ENCODE measurements at regions of chr7 and their contacts with region 1.

Region 1: GRCh38 chr7:50418086-50418515 is 32.0 kb downstream of the FIGNL1 start:
- DNase-seq: peak; percentile 43 to 81 (median 56)
- H3K4me3 ChIP-seq: no peak overlapping the region
- H3K4me3 Mint-ChIP-seq: no peak overlapping the region
- H3K27ac ChIP-seq: no peak overlapping the region
- H3K27ac Mint-ChIP-seq: no peak overlapping the region
- H3K4me1 ChIP-seq: peaks cover 13% of the 10 kb centered on the region
- H3K4me1 Mint-ChIP-seq: peaks cover 12 to 20% (median 19%) of the 10 kb centered on the region in 3 donors
- H3K27me3 ChIP-seq: no peaks in the 10 kb centered on the region
- H3K27me3 Mint-ChIP-seq: no peaks in the 10 kb centered on the region

Region 2: GRCh38 chr7:50092579-50093491 is 325.3 kb before region 1 on chr7 and contains the start of gene ZPBP:
- CTCF ChIA-PET with region 1: interaction called, 13 read pairs
- POLR2A ChIA-PET with region 1: no interaction called
- DNase-seq: peak in 4 of 5 donors; percentile 25 to 66 (median 60)
- H3K4me3 ChIP-seq: peak within 1 kb of the TSS; percentile 54
- H3K4me3 Mint-ChIP-seq: peak within 1 kb of the TSS; percentile 85 to 94 (median 90)
- H3K27ac ChIP-seq: no peak within 1 kb of the TSS
- H3K27ac Mint-ChIP-seq: peak within 1 kb of the TSS in 6 of 8 donors; percentile 24 to 85 (median 82)
- H3K4me1 ChIP-seq: no peaks in the 10 kb centered on the region
- H3K4me1 Mint-ChIP-seq: peaks cover 6 to 13% (median 7%) of the 10 kb centered on the region in 3 donors
- H3K27me3 ChIP-seq: no peaks in the 10 kb centered on the region
- H3K27me3 Mint-ChIP-seq: peaks cover 0 to under 1% of the 10 kb centered on the region in 2 donors
- total RNA-seq, gene ZPBP: 0.22 TPM in 1 of 2 experiments, not detected in the other

Region 3: GRCh38 chr7:50142425-50143017 is 275.6 kb before region 1 on chr7:
- CTCF ChIA-PET with region 1: interaction called, 39 read pairs
- POLR2A ChIA-PET with region 1: no interaction called
- DNase-seq: peak in 3 of 5 donors; percentile 15 to 62 (median 45)
- H3K4me3 ChIP-seq: no peak overlapping the region
- H3K4me3 Mint-ChIP-seq: peak overlapping the region in 5 of 7 donors; percentile 49 to 74 (median 67)
- H3K27ac ChIP-seq: no peak overlapping the region
- H3K27ac Mint-ChIP-seq: peak overlapping the region in 5 of 8 donors; percentile 22 to 85 (median 64)
- H3K4me1 ChIP-seq: peaks cover 9% of the 10 kb centered on the region
- H3K4me1 Mint-ChIP-seq: peaks cover 2 to 19% (median 17%) of the 10 kb centered on the region in 3 donors
- H3K27me3 ChIP-seq: no peaks in the 10 kb centered on the region
- H3K27me3 Mint-ChIP-seq: peaks cover 0 to 16% of the 10 kb centered on the region in 2 donors

Region 4: GRCh38 chr7:50369143-50370026 is 48.7 kb before region 1 on chr7:
- CTCF ChIA-PET with region 1: interaction called, 15 read pairs
- POLR2A ChIA-PET with region 1: no interaction called
- DNase-seq: peak in 4 of 5 donors; percentile 44 to 82 (median 72)
- H3K4me3 ChIP-seq: peak overlapping the region; percentile 27
- H3K4me3 Mint-ChIP-seq: peak overlapping the region; percentile 7 to 72 (median 62)
- H3K27ac ChIP-seq: no peak overlapping the region
- H3K27ac Mint-ChIP-seq: peak overlapping the region in 7 of 8 donors; percentile 87 to 100 (median 93)
- H3K4me1 ChIP-seq: peaks cover 97% of the 10 kb centered on the region
- H3K4me1 Mint-ChIP-seq: peaks cover 94 to 100% (median 98%) of the 10 kb centered on the region in 3 donors
- H3K27me3 ChIP-seq: no peaks in the 10 kb centered on the region
- H3K27me3 Mint-ChIP-seq: no peaks in the 10 kb centered on the region

Region 5: DNA sequence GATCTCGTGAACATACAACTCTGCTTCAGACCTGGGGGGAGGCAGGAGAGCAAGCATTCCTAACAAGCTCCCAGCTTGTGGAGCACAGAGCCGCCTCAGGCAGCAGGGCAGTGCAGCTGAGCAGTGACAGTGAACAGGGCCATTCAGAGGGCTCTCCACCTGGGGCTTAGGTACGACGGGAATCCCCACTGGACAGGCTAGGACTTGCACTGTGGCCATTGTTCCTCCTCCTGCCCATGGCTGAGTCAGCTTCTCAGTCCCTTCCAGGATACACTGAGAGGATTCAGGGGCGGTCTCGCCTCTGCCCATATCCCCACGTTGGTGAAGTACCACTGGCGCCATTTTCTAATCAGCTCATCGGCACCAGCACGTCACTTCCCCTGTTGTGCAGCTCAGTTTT is 39.0 kb before region 1 on chr7:
- CTCF ChIA-PET with region 1: interaction called, 15 read pairs
- POLR2A ChIA-PET with region 1: no interaction called
- DNase-seq: no peak
- H3K4me3 ChIP-seq: no peak overlapping the region
- H3K4me3 Mint-ChIP-seq: peak overlapping the region in 1 of 7 donors; percentile 7
- H3K27ac ChIP-seq: no peak overlapping the region
- H3K27ac Mint-ChIP-seq: peak overlapping the region in 7 of 8 donors; percentile 33 to 87 (median 69)
- H3K4me1 ChIP-seq: peaks cover 73% of the 10 kb centered on the region
- H3K4me1 Mint-ChIP-seq: peaks cover 77 to 100% (median 93%) of the 10 kb centered on the region in 3 donors
- H3K27me3 ChIP-seq: no peaks in the 10 kb centered on the region
- H3K27me3 Mint-ChIP-seq: peaks cover 0 to 3% of the 10 kb centered on the region in 2 donors

Region 6: DNA sequence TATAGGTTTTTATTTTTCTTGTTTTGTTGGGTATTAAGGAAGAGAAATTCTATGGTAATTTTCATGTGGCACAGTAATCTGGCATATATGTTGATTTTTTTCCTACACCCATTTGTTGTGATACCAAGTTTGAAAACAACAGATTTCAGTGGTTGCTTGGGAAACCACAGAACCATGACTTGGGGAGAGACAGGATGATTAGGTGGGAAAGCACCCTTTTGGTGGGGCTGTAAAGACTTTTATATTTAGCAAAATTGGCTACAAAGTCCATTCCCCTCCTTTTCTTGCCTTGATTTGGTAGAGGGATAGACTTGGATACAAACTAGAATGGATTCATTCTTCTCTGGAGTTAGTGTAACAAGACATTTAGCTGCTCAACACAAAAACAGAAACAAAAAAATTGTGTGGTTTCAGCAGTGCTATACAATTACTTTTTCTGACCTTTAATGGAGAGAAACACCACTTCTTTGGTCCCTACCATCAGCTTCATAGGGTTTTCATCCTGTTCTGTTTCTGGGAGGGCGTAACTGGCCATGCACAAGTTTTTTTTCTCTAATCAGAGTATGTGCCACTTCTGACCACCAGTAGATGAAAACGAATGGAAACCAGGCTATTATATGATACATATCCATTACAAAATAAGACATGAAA is 20.7 kb before region 1 on chr7:
- CTCF ChIA-PET with region 1: interaction called, 19 read pairs
- POLR2A ChIA-PET with region 1: no interaction called
- DNase-seq: peak in 4 of 5 donors; percentile 19 to 65 (median 36)
- H3K4me3 ChIP-seq: no peak overlapping the region
- H3K4me3 Mint-ChIP-seq: peak overlapping the region in 5 of 7 donors; percentile 65 to 76 (median 69)
- H3K27ac ChIP-seq: peak overlapping the region; percentile 5
- H3K27ac Mint-ChIP-seq: peak overlapping the region; percentile 63 to 94 (median 94)
- H3K4me1 ChIP-seq: peaks cover 62% of the 10 kb centered on the region
- H3K4me1 Mint-ChIP-seq: peaks cover 75 to 85% (median 82%) of the 10 kb centered on the region in 3 donors
- H3K27me3 ChIP-seq: no peaks in the 10 kb centered on the region
- H3K27me3 Mint-ChIP-seq: peaks cover 0 to 4% of the 10 kb centered on the region in 2 donors